ENCODE measurements at regions of chr4 and their contacts with region 1.

Region 1: GRCh38 chr4:47463235-47463956 is at the start of gene COMMD8:
- DNase-seq: peak; percentile 94 to 99 (median 96)

Region 2: DNA sequence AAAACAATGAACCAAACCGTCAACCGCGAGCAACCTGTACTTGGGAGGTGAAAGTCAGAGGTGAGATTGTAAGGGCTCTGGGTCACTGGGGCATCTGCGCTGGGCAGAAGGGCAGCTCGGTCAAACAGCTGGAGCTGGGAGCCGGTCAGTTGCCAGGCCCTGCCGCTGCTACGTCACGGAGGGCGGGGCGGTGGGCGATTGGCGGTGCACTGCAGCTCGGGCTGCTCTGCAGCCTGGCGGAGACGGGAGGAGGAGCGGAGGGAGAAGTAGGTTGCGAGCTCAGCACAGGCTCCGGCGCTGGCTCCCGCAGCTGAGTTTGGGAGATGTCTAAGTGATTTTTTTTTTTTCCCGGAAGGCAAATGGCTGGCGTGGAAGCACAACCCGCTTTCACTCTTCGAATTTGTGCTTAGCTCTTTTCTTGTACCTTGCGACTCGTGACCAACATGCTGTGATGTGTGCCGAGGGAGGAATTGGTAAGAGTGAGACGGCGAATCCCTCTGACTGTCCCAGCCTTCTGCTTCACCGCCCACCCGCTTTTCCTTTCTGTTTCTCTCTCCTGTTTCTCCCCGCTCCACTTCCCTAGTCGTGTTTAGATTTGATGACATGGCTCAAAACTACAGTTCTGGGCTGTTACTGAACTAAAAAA is 21.8 kb after region 1 on chr4 and contains the start of gene ATP10D:
- intact Hi-C with region 1: loop called (anchors 1 kb)
- DNase-seq: peak; percentile 93 to 99 (median 96)

Region 3: DNA sequence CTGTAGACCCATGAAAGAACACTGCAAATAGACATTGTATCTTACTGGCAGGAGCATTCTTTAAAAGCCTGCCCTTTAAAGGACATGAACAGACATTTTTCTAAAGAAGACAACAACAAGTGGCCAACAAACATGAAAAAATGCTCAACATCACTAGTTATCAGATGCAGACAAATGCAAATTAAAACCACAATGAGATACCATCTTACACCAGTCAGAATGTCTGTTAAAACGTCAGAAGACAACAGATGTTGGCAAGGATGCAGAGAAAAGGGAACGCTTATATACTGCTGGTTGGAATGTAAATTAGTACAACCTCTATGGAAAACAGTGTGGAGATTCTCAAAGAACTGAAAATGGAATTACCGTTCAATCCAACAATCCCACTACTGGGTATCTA is 98.9 kb after region 1 on chr4:
- intact Hi-C with region 1: loop called (anchors 5 kb)
- DNase-seq: no peak

Region 4: GRCh38 chr4:47698837-47699236 is 235.4 kb after region 1 on chr4:
- intact Hi-C with region 1: no loop called
- DNase-seq: no peak

Measured in posterior cingulate gyrus (tissue), 11 donors.